ENCODE measurements at regions of chr2 and their contacts with region 1.

Region 1: GRCh38 chr2:201130524-201131186 is 14.7 kb downstream of the CFLAR start:
- DNase-seq: peak; percentile 46 to 73
- ATAC-seq: peak; percentile 56 to 81 (median 68)
- H3K4me3 ChIP-seq: no peak overlapping the region
- H3K4me3 Mint-ChIP-seq: peak overlapping the region; percentile 59
- H3K27ac ChIP-seq: peak overlapping the region; percentile 73
- H3K27ac Mint-ChIP-seq: peak overlapping the region; percentile 97 to 100
- H3K4me1 ChIP-seq: peaks cover 64% of the 10 kb centered on the region
- H3K4me1 Mint-ChIP-seq: peaks cover 75 to 76% of the 10 kb centered on the region in 2 donors
- H3K27me3 ChIP-seq: no peaks in the 10 kb centered on the region
- H3K27me3 Mint-ChIP-seq: no peaks in the 10 kb centered on the region
- CTCF ChIP-seq: no peak

Region 2: GRCh38 chr2:201118121-201118960 is 12.3 kb before region 1 on chr2:
- intact Hi-C with region 1: loop called (anchors 2 kb)
- DNase-seq: peak; percentile 87 to 93
- ATAC-seq: peak; percentile 46 to 61 (median 54)
- H3K4me3 ChIP-seq: peak overlapping the region; percentile 90
- H3K4me3 Mint-ChIP-seq: peak overlapping the region; percentile 95
- H3K27ac ChIP-seq: peak overlapping the region; percentile 93
- H3K27ac Mint-ChIP-seq: peak overlapping the region; percentile 93 to 100
- H3K4me1 ChIP-seq: peaks cover 50% of the 10 kb centered on the region
- H3K4me1 Mint-ChIP-seq: peaks cover 79 to 82% of the 10 kb centered on the region in 2 donors
- H3K27me3 ChIP-seq: no peaks in the 10 kb centered on the region
- H3K27me3 Mint-ChIP-seq: no peaks in the 10 kb centered on the region
- CTCF ChIP-seq: peak; percentile 40

Measured in natural killer cell (primary cell).